PC-9 (cell line): ENCODE measurements at regions of chr12 and their contacts with region 1.

Region 1: GRCh38 chr12:58163021-58163420 is 221.7 kb downstream of the ATP23 start:
- DNase-seq: no peak
- H3K4me3 ChIP-seq: no peak overlapping the region
- H3K27ac ChIP-seq: no peak overlapping the region
- H3K4me1 ChIP-seq: no peaks in the 10 kb centered on the region
- H3K27me3 ChIP-seq: no peaks in the 10 kb centered on the region
- CTCF ChIP-seq: no peak

Region 2: DNA sequence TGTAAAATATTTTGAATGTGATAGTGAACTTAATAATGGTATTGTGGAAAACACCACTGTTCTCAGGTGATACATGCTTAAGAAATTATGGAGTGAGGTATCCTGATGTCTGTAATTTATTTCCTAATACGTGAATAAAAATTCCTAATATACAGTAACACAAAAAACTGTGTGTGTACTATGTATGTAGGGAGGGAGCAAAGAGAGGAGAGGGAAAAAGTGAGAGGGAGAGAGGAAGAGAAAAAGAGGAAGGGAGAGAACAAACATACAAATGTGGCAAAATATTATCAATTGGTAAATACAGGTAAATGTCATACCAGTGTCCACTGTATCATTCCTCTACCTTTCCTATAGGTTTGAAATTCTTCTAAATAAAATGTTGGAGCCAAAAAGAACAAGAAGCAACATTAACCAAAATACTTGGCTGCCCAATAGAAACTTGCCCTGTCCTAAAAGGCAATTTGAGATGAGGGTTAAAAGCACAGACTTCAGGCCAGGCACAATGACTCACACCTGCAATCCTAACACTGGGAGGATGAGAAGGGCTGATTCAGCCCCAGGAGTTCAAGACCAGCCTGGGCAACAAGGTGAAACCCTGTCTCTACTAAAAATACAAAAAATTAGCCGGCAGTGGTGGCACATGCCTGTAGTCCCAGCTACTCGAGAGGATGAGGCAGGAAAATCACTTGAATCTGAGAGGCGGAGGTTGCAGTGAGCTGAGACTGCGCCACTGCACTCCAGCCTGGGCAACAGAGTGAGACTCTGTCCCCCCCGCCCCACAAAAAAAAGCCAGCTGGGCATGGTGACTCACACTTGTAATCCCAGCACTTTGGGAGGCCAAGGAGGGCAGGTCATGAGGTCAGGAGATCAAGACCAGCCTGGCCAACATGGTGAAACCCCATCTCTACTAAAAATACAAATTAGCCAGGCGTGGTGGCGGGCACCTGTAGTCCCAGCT is 746.7 kb before region 1 on chr12:
- CTCF ChIA-PET with region 1: no interaction called
- POLR2A ChIA-PET with region 1: no interaction called
- intact Hi-C with region 1: no loop called
- DNase-seq: no peak
- H3K4me3 ChIP-seq: no peak overlapping the region
- H3K27ac ChIP-seq: no peak overlapping the region
- H3K4me1 ChIP-seq: no peaks in the 10 kb centered on the region
- H3K27me3 ChIP-seq: no peaks in the 10 kb centered on the region
- CTCF ChIP-seq: no peak

Region 3: DNA sequence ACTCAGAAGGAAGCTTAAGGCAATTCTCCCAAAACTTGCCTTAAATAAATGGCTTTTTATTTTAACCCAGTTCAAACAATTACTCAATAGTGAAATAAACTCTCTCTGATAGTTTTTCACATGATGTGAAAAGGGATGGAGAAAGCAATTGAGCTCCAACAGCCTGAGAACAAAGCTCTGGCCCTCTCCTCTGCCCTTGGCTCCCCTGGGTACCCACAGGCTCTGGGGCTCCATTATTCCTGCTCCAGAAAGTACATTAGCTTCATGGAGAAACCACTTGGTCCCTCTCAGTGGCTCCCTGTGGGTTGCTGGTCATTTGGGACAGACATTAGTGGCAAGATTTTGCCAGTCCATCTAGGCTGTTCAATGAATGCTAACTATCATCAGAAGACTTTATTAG is 21.2 kb after region 1 on chr12:
- CTCF ChIA-PET with region 1: no interaction called
- POLR2A ChIA-PET with region 1: no interaction called
- intact Hi-C with region 1: loop called (anchors 1 kb)
- DNase-seq: no peak
- H3K4me3 ChIP-seq: no peak overlapping the region
- H3K27ac ChIP-seq: no peak overlapping the region
- H3K4me1 ChIP-seq: no peaks in the 10 kb centered on the region
- H3K27me3 ChIP-seq: no peaks in the 10 kb centered on the region
- CTCF ChIP-seq: no peak

Region 4: GRCh38 chr12:58961906-58962305 is 798.9 kb after region 1 on chr12:
- CTCF ChIA-PET with region 1: no interaction called
- POLR2A ChIA-PET with region 1: no interaction called
- intact Hi-C with region 1: no loop called
- DNase-seq: no peak
- H3K4me3 ChIP-seq: no peak overlapping the region
- H3K27ac ChIP-seq: no peak overlapping the region
- H3K4me1 ChIP-seq: no peaks in the 10 kb centered on the region
- H3K27me3 ChIP-seq: no peaks in the 10 kb centered on the region
- CTCF ChIP-seq: no peak